A673 (cell line): ENCODE measurements at regions of chr4 and their contacts with region 1.

Region 1: GRCh38 chr4:47122592-47123291 is 91.4 kb downstream of the GABRB1 start:
- DNase-seq: peak; percentile 88
- H3K4me3 ChIP-seq: no peak overlapping the region
- H3K27ac ChIP-seq: no peak overlapping the region
- H3K4me1 ChIP-seq: peaks cover 8% of the 10 kb centered on the region
- H3K27me3 ChIP-seq: no peaks in the 10 kb centered on the region
- CTCF ChIP-seq: peak; percentile 87

Region 2: DNA sequence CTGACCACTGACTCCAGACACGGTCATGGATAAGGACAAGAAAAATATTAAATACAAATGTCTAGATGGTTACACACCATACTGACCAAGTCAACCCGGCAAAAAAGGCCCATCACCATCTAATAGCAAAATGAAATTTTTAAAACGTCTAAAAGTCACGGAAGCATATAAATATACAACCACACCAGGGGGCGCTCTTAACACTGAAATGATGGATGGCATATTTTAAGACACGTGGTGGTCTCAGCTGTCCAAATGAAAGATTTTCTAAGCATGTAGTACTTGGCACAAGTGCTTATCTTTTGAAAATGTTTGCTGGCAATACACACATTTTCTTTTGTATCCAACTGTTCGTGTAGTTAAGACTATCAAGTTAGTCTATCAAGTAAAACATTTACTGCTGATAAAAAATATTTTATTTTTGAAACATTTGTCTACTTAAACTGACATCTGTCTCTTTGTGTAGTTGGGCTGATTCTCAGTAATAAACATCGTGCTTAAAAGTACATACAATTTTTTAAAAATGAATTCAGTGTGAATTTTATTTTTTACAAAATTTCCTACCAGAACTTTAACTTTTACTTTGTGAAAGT is 278.3 kb before region 1 on chr4:
- CTCF ChIA-PET with region 1: interaction called, 3 read pairs
- POLR2A ChIA-PET with region 1: no interaction called
- intact Hi-C with region 1: loop called (anchors 5 kb)
- DNase-seq: peak; percentile 79
- H3K4me3 ChIP-seq: no peak overlapping the region
- H3K27ac ChIP-seq: no peak overlapping the region
- H3K4me1 ChIP-seq: no peaks in the 10 kb centered on the region
- H3K27me3 ChIP-seq: no peaks in the 10 kb centered on the region
- CTCF ChIP-seq: peak; percentile 81

Region 3: GRCh38 chr4:46886711-46887110 is 236.0 kb before region 1 on chr4:
- CTCF ChIA-PET with region 1: no interaction called
- POLR2A ChIA-PET with region 1: no interaction called
- intact Hi-C with region 1: no loop called
- DNase-seq: peak; percentile 21
- H3K4me3 ChIP-seq: no peak overlapping the region
- H3K27ac ChIP-seq: no peak overlapping the region
- H3K4me1 ChIP-seq: peaks cover 7% of the 10 kb centered on the region
- H3K27me3 ChIP-seq: peaks cover 4% of the 10 kb centered on the region
- CTCF ChIP-seq: peak; percentile 46

Region 4: GRCh38 chr4:46931981-46932380 is 190.8 kb before region 1 on chr4:
- CTCF ChIA-PET with region 1: interaction called, 7 read pairs
- POLR2A ChIA-PET with region 1: no interaction called
- intact Hi-C with region 1: loop called (anchors 5 kb)
- DNase-seq: peak; percentile 67
- H3K4me3 ChIP-seq: no peak overlapping the region
- H3K27ac ChIP-seq: no peak overlapping the region
- H3K4me1 ChIP-seq: no peaks in the 10 kb centered on the region
- H3K27me3 ChIP-seq: peaks cover 28% of the 10 kb centered on the region
- CTCF ChIP-seq: peak; percentile 79

Region 5: GRCh38 chr4:47032415-47033106 is 90.2 kb before region 1 on chr4:
- CTCF ChIA-PET with region 1: no interaction called
- POLR2A ChIA-PET with region 1: no interaction called
- intact Hi-C with region 1: loop called (anchors 5 kb)
- DNase-seq: peak; percentile 87
- H3K4me3 ChIP-seq: peak overlapping the region; percentile 53
- H3K27ac ChIP-seq: no peak overlapping the region
- H3K4me1 ChIP-seq: no peaks in the 10 kb centered on the region
- H3K27me3 ChIP-seq: no peaks in the 10 kb centered on the region
- CTCF ChIP-seq: peak; percentile 95

Region 6: DNA sequence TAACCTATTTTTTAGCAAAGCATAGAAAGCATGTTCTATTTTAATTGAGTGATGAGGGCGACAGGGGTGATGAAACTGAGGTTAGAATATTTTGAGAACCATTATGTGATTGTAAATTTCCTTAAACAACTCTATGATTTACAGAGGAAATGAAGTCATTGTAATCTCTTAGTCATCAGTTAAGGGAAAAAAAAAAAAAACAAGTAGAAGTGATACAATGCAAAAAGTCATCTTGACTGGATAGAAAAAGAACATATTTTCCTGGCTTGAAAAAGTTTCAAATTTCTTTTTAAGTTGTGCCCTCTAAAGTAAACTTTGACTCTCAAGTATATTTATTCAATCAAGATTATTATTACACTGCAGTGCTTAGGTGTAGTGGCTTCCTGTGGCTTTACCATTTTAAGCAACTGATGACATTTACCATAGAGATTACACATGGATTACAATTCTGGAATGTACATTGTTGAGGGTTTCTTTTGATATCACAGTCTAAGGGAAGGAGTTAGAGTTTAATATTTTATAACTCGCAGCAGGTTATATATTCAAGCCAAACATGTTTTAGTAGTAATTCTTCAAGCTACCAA is 50.8 kb before region 1 on chr4:
- CTCF ChIA-PET with region 1: no interaction called
- POLR2A ChIA-PET with region 1: no interaction called
- intact Hi-C with region 1: no loop called
- DNase-seq: peak; percentile 70
- H3K4me3 ChIP-seq: no peak overlapping the region
- H3K27ac ChIP-seq: peak overlapping the region; percentile 65
- H3K4me1 ChIP-seq: peaks cover 54% of the 10 kb centered on the region
- H3K27me3 ChIP-seq: no peaks in the 10 kb centered on the region
- CTCF ChIP-seq: no peak

Region 7: GRCh38 chr4:47368211-47368610 is 245.5 kb after region 1 on chr4:
- CTCF ChIA-PET with region 1: no interaction called
- POLR2A ChIA-PET with region 1: no interaction called
- intact Hi-C with region 1: no loop called
- DNase-seq: no peak
- H3K4me3 ChIP-seq: no peak overlapping the region
- H3K27ac ChIP-seq: no peak overlapping the region
- H3K4me1 ChIP-seq: peaks cover 6% of the 10 kb centered on the region
- H3K27me3 ChIP-seq: peaks cover 7% of the 10 kb centered on the region
- CTCF ChIP-seq: no peak

Region 8: GRCh38 chr4:47383829-47384427 is 261.2 kb after region 1 on chr4:
- CTCF ChIA-PET with region 1: no interaction called
- POLR2A ChIA-PET with region 1: no interaction called
- intact Hi-C with region 1: loop called (anchors 5 kb)
- DNase-seq: peak; percentile 64
- H3K4me3 ChIP-seq: no peak overlapping the region
- H3K27ac ChIP-seq: no peak overlapping the region
- H3K4me1 ChIP-seq: no peaks in the 10 kb centered on the region
- H3K27me3 ChIP-seq: no peaks in the 10 kb centered on the region
- CTCF ChIP-seq: peak; percentile 67

Region 9: GRCh38 chr4:47562297-47562696 is 439.6 kb after region 1 on chr4:
- CTCF ChIA-PET with region 1: no interaction called
- POLR2A ChIA-PET with region 1: no interaction called
- intact Hi-C with region 1: no loop called
- DNase-seq: no peak
- H3K4me3 ChIP-seq: no peak overlapping the region
- H3K27ac ChIP-seq: no peak overlapping the region
- H3K4me1 ChIP-seq: no peaks in the 10 kb centered on the region
- H3K27me3 ChIP-seq: no peaks in the 10 kb centered on the region
- CTCF ChIP-seq: no peak